AG04450 (cell line): ENCODE measurements at regions of chr9 and their contacts with region 1.

Region 1: GRCh38 chr9:128702445-128702948 is at the start of gene PKN3:
- DNase-seq: no peak
- H3K4me3 ChIP-seq: peak within 1 kb of the TSS; percentile 69
- H3K27ac ChIP-seq: no peak within 1 kb of the TSS
- H3K27me3 ChIP-seq: no peaks in the 10 kb centered on the region
- CTCF ChIP-seq: peak; percentile 79
- polyA plus RNA-seq, gene PKN3: 1.7 and 2.2 TPM in 2 replicates

Region 2: DNA sequence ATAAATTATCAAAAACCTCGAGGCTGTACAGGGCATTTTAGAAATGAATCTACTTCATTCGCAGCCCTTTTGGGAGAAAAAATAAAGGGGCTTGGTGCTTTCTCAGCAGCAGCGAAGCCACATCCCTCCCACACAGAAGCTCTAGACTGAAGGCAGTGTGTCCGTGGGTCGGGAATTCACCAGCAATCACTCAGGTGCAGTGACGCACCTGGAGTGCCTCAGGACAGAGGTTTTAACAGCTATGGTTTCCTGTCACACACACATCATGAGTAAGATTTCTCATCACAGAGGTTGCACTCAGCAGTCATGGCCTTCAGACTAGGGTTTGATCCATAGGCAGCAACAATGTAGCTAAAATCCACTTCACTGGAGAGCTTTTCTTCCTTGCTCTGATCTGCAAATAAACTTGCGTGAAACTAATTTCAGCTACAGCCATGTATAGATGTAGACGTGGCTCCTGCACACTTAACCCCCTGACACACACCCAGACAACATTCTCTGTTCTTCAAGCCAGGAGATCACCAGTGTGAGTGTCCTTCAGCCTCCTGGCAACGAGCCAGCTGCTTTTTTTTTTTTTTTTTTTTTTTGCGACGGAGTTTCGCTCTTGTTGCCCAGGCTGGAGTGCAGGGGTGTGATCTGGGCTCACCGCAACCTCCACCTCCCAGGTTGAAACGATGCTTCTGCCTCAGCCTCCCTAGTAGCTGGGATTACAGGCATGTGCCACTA is 80.6 kb before region 1 on chr9:
- CTCF ChIA-PET with region 1: no interaction called
- POLR2A ChIA-PET with region 1: interaction called, 14 read pairs
- DNase-seq: no peak
- H3K4me3 ChIP-seq: no peak overlapping the region
- H3K27ac ChIP-seq: no peak overlapping the region
- H3K27me3 ChIP-seq: no peaks in the 10 kb centered on the region
- CTCF ChIP-seq: no peak